Astrocyte of the cerebellum (primary cell): ENCODE measurements at regions of chr7 and their contacts with region 1.

Region 1: GRCh38 chr7:107743567-107744344 is at the start of gene CBLL1:
- DNase-seq: peak; percentile 92
- H3K4me3 ChIP-seq: peak within 1 kb of the TSS; percentile 91
- CTCF ChIP-seq: peak; percentile 84

Region 2: GRCh38 chr7:107180378-107180777 is 563.4 kb before region 1 on chr7:
- in situ Hi-C with region 1: loop called (anchors 25 kb)
- DNase-seq: peak; percentile 63
- H3K4me3 ChIP-seq: no peak overlapping the region
- CTCF ChIP-seq: no peak

Region 3: DNA sequence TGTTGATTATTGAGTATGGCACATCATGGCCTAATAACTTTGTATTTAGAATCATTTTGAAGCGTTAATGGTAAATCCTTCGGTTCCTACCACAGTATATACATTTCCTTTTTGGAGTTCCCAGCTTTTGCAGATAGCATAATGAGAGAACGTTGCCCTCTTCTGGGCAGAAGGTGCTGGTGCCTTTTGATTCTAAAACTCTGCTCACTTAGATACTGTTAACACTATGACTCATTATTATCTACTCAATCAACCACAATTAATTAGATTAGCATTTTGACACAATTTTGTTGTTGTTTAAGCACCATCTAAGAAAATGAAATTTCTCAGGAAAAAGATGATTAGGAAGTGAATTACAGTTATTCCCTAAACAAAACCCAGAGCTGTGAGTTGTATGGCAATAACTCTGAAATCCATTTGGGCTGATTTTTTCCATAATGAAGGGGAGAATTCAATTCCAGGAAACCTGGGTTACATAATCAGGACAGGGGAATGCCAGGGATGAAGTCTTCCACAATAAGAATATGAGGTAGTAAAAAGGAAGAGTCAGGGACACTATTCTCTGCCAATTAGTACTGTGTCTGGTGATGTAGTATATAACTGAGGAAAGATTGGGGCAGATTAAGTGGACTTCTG is 135.8 kb after region 1 on chr7:
- in situ Hi-C with region 1: loop called (anchors 10 kb)
- DNase-seq: no peak
- H3K4me3 ChIP-seq: no peak overlapping the region
- CTCF ChIP-seq: peak; percentile 76